Psoas muscle (tissue), 8 donors: ENCODE measurements at regions of chr7 and their contacts with region 1.

Region 1: DNA sequence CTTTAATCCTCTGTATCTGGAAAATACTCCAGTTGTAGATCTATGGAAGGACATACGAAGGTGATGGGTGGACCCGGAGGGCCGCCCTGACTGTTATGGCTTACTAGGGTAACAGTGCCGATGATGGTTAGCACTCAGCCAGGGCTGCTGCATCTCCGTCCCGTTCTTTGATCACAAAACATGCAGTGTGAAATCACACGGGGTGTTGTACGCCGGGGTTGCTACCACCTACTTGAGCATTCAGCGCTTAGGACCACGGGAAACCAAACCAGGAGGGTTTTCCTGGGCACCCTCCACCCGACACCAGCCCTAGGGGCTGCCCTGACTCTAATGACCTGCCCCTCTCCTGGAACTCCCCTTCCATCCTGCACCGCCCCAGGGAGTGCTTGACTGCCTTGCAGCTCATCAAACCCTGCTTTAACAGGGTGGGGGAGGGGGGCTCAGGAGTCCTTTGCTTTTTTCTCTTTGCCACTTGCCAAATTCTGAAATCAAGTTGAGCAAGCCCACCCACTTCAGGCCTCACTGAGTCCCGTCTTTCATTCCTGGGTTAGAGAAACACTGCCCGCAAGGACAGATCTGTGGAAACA is 20.4 kb downstream of the ZNF775 start:
- DNase-seq: no peak
- ATAC-seq: no peak
- H3K4me3 ChIP-seq: no peak overlapping the region
- H3K27ac ChIP-seq: no peak overlapping the region
- H3K4me1 ChIP-seq: peaks cover 4% of the 10 kb centered on the region
- H3K27me3 ChIP-seq: no peaks in the 10 kb centered on the region
- CTCF ChIP-seq: no peak

Region 2: DNA sequence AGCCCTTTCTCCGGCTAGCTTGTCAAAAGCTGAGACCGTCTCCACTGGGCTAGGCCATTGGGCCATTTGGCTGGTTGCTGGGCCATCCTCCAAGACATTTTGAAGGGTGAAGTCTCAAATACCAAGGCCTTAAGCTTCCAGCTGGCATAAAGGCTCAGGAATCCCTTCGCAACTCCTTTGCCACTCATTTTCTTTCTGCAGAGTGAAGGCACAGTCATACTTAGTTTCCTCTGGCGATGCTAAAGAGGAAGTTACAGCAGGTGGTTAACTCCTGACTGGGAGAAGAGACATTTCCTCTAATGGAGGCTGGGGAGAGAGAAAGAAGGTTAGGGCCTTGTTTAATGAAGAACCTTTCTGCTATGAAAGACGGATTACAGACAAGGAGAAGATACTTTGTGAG is 35.6 kb before region 1 on chr7:
- intact Hi-C with region 1: loop called in 1 of 2 experiments (anchors 5 kb)
- DNase-seq: no peak
- ATAC-seq: peak in 3 of 4 donors; percentile 22 to 31 (median 27)
- H3K4me3 ChIP-seq: no peak overlapping the region
- H3K27ac ChIP-seq: peak overlapping the region; percentile 78
- H3K4me1 ChIP-seq: peaks cover 37% of the 10 kb centered on the region
- H3K27me3 ChIP-seq: no peaks in the 10 kb centered on the region
- CTCF ChIP-seq: no peak